ENCODE measurements at regions of chr6 and their contacts with region 1.

Region 1: DNA sequence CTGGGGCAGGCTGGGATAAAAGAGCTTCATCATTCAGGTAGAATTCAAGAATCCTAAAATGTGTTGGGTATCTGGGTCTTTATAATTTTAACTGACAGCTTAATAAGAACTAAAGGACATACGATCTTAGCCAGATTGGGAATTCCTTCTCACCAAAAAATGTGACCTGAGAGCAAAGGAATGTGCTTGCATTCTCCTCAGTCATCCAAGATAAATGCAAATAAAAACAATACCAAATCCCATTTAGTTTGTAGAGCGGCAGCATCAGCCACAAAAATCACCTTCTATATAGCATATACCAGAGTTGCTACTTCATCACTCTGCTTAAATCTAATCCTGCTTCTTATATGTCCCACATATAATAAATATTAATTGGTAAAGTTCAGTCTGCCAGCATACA is 16.9 kb downstream of the USP49 start:
- DNase-seq: no peak
- ATAC-seq: no peak
- H3K4me3 Mint-ChIP-seq: no peak overlapping the region
- H3K27ac Mint-ChIP-seq: no peak overlapping the region
- H3K4me1 Mint-ChIP-seq: peaks cover 8% of the 10 kb centered on the region
- H3K27me3 Mint-ChIP-seq: no peaks in the 10 kb centered on the region
- CTCF ChIP-seq: no peak

Region 2: DNA sequence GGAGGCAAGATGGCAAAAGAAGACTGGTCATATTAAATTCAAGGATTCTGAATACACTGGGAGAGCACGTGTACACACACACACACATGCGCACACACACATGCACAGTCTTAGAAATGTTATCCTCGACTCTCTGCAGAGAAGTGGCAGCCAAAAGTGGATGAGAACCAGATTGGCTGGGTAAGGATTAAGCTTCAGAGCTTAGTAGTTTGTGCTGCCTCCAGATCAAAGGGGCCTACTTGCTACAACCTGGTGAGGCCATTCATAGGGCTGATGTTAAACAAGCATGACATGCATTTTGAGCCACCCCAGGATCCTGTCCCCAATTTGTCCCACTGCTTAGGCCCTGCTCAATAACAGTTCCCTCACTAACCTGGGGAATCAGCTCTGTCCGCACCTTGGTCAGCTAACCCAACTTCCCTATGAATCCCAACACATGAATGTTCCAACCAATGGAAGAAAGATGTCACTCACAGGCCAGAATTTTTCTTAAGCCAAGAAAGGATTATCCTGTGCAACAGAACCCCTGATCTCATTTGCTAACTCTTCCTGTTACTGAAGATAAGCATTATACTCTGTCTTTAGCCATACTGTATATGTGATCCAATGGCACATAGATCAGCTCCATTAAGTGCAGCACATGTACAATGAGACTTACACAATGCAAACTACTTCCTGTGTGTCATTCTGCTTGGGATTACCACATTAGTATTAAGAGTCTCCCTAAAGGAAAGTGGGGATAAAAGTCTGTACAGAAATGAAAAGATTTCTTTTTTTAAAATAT is 59.8 kb before region 1 on chr6:
- CTCF ChIA-PET with region 1: no interaction called
- POLR2A ChIA-PET with region 1: no interaction called
- intact Hi-C with region 1: loop called (anchors 10 kb)
- DNase-seq: no peak
- ATAC-seq: no peak
- H3K4me3 Mint-ChIP-seq: no peak overlapping the region
- H3K27ac Mint-ChIP-seq: no peak overlapping the region
- H3K4me1 Mint-ChIP-seq: no peaks in the 10 kb centered on the region
- H3K27me3 Mint-ChIP-seq: no peaks in the 10 kb centered on the region
- CTCF ChIP-seq: no peak